Mammary epithelial cell (primary cell): ENCODE measurements at regions of chr2 and their contacts with region 1.

Region 1: GRCh38 chr2:235135990-235136561 is 184.3 kb downstream of the SH3BP4 start:
- DNase-seq: peak; percentile 40
- H3K4me3 ChIP-seq: no peak overlapping the region
- H3K27ac ChIP-seq: no peak overlapping the region
- H3K4me1 ChIP-seq: no peaks in the 10 kb centered on the region
- H3K27me3 ChIP-seq: no peaks in the 10 kb centered on the region
- CTCF ChIP-seq: peak; percentile 82 to 91

Region 2: DNA sequence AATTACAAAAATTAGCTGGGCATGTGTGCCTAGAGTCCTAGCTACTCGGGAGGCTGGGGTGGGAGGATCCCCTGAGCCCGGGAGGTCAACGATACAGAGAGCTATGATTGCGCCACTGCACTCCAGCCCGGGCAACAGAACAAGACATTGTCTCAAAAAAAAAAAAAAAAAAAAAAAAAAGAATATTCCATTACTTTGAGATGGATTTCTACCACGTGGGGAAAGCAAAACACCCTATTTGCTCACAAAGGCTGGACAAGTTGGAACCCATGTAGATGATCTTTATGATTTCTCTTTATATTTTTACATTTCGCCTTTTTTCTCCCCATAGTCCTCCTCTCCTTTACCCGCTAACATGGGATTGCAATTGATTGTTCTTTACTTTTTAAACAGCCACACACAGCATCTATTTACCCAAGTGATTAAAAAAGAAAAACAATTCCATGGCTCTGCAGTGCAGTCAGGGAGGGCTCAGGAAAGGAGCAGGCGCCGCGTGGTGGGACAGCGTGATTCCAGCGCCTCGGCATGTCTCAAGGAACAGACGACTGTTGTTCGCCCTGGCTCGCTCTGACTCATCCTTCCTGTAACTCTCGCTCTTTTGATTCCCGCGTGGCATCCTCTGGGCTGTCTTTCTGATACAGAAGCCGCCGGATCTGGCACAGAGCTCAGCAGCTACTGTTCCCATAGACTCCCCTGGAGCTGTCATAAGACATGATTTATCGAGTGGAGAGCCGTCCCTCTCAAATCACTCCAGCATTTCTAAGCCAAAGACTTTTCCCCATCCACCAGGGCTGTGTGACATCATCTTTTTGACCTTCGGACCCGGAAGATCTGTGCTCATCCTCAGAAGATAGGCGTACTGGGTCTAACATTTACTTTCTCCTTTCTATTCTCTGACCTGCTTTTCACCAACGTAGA is 127.4 kb after region 1 on chr2:
- CTCF ChIA-PET with region 1: no interaction called
- dilution Hi-C with region 1: no loop called
- in situ Hi-C with region 1: no loop called
- intact Hi-C with region 1: loop called (anchors 10 kb)
- DNase-seq: peak; percentile 65
- H3K4me3 ChIP-seq: no peak overlapping the region
- H3K27ac ChIP-seq: no peak overlapping the region
- H3K4me1 ChIP-seq: peaks cover 8% of the 10 kb centered on the region
- H3K27me3 ChIP-seq: no peaks in the 10 kb centered on the region
- CTCF ChIP-seq: no peak

Region 3: DNA sequence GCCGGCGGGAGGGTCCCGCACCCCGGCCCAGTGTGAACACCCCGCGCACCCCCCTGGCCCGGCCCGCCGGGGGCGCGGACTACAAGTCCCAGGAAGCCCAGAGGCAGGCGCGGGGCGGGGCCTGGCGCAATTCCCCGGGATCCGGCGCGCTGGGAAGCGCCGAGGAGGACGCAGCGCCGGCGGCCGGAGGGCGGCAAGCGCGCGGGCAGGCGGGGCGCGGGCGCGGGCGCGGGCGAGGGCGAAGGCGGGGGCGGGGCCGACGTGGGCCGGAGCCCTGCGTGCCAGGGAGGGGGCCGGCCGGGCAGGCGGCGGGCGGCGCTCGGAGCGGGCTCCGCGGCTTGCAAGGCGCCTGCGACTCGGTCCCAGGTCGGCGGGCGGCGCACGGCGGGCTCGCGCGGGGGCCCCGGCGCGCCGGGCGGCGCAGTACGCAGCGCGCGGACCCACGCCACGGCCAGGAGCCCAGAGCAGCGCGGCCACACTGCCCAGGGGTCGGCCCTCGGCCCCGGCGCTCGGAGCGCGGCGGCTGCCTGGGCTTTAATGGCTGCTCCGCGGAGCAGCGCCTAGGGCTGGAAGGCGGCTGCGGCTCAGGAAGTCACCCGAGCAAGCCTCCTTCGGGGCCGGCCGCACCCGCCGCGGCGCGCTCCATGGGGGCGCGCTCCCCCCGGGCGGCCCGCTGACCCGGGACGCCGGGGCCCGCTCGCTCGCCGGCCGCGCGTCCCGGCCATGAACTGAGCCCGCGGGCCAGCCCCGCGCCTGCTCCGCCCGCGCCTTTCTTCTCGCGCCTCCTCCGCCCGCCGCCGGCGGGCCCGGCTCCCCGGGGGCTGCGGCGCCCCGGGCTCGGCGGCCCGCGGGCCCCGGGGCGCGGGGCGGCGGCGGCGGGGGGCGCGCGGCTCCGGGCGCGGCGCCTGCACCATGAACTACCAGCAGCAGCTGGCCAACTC is 358.0 kb after region 1 on chr2 and contains the start of gene AGAP1:
- CTCF ChIA-PET with region 1: no interaction called
- dilution Hi-C with region 1: no loop called
- in situ Hi-C with region 1: no loop called
- intact Hi-C with region 1: loop called (anchors 2 kb)
- DNase-seq: peak; percentile 76
- H3K4me3 ChIP-seq: peak within 1 kb of the TSS; percentile 62 to 80 (median 67)
- H3K27ac ChIP-seq: peak within 1 kb of the TSS; percentile 46
- H3K4me1 ChIP-seq: peaks cover 14% of the 10 kb centered on the region
- H3K27me3 ChIP-seq: no peaks in the 10 kb centered on the region
- CTCF ChIP-seq: no peak
- total RNA-seq, gene AGAP1: 11.2 to 28.9 TPM

Region 4: GRCh38 chr2:235551965-235552364 is 415.9 kb after region 1 on chr2:
- CTCF ChIA-PET with region 1: no interaction called
- dilution Hi-C with region 1: no loop called
- in situ Hi-C with region 1: no loop called
- intact Hi-C with region 1: loop called (anchors 5 kb)
- DNase-seq: peak; percentile 36
- H3K4me3 ChIP-seq: no peak overlapping the region
- H3K27ac ChIP-seq: no peak overlapping the region
- H3K4me1 ChIP-seq: no peaks in the 10 kb centered on the region
- H3K27me3 ChIP-seq: no peaks in the 10 kb centered on the region
- CTCF ChIP-seq: peak; percentile 19 to 53

Region 5: GRCh38 chr2:235605312-235606003 is 469.4 kb after region 1 on chr2:
- CTCF ChIA-PET with region 1: no interaction called
- dilution Hi-C with region 1: no loop called
- in situ Hi-C with region 1: loop called in 1 of 2 experiments (anchors 10 kb)
- intact Hi-C with region 1: no loop called
- DNase-seq: peak; percentile 87
- H3K4me3 ChIP-seq: no peak overlapping the region
- H3K27ac ChIP-seq: no peak overlapping the region
- H3K4me1 ChIP-seq: peaks cover 11% of the 10 kb centered on the region
- H3K27me3 ChIP-seq: no peaks in the 10 kb centered on the region
- CTCF ChIP-seq: no peak